ENCODE measurements at regions of chrX and their contacts with region 1.

Region 1: GRCh38 chrX:23883737-23884354 is 23.9 kb downstream of the APOO start:
- H3K4me3 Mint-ChIP-seq: peak overlapping the region; percentile 18
- H3K27ac Mint-ChIP-seq: peak overlapping the region; percentile 97
- H3K4me1 Mint-ChIP-seq: peaks cover 37% of the 10 kb centered on the region
- H3K27me3 Mint-ChIP-seq: no peaks in the 10 kb centered on the region

Region 2: DNA sequence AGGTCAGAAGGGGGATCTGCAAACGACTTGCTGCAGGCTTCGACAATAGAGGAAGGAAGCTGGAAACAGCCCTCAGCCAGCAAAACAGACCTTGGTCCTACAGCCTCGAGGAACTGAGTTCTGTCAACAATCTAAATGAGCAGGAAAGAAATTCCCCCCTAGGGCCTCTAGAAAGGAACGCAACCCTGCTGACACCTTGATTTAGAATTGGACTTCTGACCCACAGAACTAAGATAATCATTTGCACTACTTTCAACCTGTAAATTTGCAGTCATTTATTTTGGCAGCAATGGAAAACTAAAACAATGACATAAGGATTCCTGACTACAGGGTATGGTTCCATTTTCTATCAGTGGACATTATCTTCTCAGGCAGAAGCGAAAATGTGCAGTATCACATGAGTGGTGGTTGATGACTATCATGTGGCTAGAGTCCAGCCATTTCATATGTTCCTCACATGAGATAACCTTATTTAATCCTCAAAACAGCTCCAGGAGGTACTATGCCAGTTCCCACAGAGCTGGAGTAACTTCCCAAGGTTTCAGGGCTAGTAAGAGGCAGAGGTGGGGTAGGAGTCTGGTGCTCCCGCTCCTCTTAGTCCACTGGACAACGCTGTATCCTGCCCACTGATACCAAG is 39.2 kb before region 1 on chrX:
- intact Hi-C with region 1: loop called (anchors 5 kb)
- H3K4me3 Mint-ChIP-seq: peak overlapping the region; percentile 24
- H3K27ac Mint-ChIP-seq: peak overlapping the region; percentile 96
- H3K4me1 Mint-ChIP-seq: peaks cover 45% of the 10 kb centered on the region
- H3K27me3 Mint-ChIP-seq: no peaks in the 10 kb centered on the region

Measured in dendritic cell treated with granulocyte-macrophage colony-stimulating factor and Interleukin-4, amounts not matched to agents 40 ng/mL and 50 ng/mL, for 4 days (primary cell).